ENCODE measurements at regions of chr12 and their contacts with region 1.

Region 1: GRCh38 chr12:104137913-104138796 is at the start of gene NFYB:
- DNase-seq: peak; percentile 95
- ATAC-seq: peak; percentile 98
- H3K4me3 Mint-ChIP-seq: peak within 1 kb of the TSS; percentile 83
- H3K27ac Mint-ChIP-seq: peak within 1 kb of the TSS; percentile 90
- H3K4me1 Mint-ChIP-seq: peaks cover 19% of the 10 kb centered on the region
- H3K27me3 Mint-ChIP-seq: no peaks in the 10 kb centered on the region
- total RNA-seq, gene NFYB: 18.8 to 27.2 TPM

Region 2: DNA sequence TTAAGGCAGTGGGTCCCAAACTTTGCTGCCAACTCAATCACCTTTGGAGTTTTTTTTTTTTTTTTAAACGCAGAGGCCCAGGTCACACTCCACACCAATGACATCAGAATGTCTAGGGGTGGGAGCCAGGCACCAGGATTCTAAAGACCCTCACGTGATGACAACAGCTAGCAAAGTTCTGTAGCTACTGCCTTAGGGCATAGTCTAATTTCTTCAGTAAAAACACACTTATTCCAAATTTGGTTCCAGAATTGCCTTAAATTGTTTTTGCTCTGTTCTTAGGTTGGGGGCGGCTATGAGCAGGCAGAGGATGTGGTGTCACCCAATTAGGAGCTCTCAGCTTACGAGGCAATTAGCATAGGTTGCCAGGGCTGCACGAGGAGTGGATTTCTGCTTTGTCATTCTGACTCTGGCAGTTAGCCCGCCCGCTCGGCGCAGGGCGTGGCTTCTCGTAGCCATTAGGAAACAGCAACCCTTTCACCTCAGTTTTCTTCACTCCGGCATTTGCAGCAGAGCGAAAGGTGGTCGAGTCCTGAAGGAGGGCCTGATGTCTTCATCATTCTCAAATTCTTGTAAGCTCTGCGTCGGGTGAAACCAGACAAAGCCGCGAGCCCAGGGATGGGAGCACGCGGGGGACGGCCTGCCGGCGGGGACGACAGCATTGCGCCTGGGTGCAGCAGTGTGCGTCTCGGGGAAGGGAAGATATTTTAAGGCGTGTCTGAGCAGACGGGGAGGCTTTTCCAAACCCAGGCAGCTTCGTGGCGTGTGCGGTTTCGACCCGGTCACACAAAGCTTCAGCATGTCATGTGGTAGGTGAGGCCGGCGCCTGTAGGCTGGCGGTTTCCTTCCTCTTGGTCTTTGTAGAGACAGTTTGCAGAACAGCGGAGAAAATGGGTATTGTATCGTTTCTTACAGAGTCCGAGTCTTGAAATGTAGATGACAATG is 148.7 kb after region 1 on chr12:
- CTCF ChIA-PET with region 1: interaction called, 3 read pairs
- POLR2A ChIA-PET with region 1: interaction called, 10 read pairs
- intact Hi-C with region 1: loop called (anchors 1 kb)
- DNase-seq: peak; percentile 95
- ATAC-seq: peak; percentile 84
- H3K4me3 Mint-ChIP-seq: peak overlapping the region; percentile 95
- H3K27ac Mint-ChIP-seq: peak overlapping the region; percentile 97
- H3K4me1 Mint-ChIP-seq: peaks cover 12% of the 10 kb centered on the region
- H3K27me3 Mint-ChIP-seq: no peaks in the 10 kb centered on the region

Region 3: DNA sequence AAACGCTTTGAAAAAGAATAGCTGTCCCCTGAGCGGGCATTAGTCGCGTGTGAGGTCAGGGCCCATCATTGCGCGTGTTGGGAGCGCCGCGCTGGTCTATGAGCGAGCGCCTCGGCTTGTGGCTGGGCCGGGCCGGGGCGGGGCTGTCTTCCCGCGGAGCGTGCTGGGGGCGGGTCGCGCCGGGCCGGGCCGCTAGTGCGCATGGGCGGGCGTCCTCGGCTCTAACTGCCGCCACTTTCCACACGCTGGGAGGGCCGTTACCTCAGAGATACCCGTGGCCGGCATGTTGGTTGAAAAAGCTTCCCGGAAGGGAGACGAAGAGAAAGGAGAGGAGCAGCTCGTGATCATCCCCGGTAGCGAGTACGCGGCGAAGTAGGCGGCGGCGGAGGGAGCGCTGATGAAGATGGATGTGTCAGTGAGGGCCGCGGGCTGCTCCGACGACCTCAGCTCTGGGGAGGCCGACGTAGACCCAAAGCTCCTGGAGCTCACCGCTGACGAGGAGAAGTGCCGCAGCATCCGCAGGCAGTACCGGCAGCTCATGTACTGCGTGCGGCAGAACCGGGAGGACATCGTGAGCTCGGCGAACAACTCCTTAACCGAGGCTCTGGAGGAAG is 165.5 kb after region 1 on chr12 and contains the start of gene EID3:
- CTCF ChIA-PET with region 1: no interaction called
- POLR2A ChIA-PET with region 1: no interaction called
- intact Hi-C with region 1: loop called (anchors 1 to 5 kb)
- DNase-seq: peak; percentile 95
- ATAC-seq: peak; percentile 97
- H3K4me3 Mint-ChIP-seq: peak within 1 kb of the TSS; percentile 81
- H3K27ac Mint-ChIP-seq: peak within 1 kb of the TSS; percentile 96
- H3K4me1 Mint-ChIP-seq: peaks cover 57% of the 10 kb centered on the region
- H3K27me3 Mint-ChIP-seq: no peaks in the 10 kb centered on the region
- total RNA-seq, gene EID3: 3.9 to 4.6 TPM

Region 4: DNA sequence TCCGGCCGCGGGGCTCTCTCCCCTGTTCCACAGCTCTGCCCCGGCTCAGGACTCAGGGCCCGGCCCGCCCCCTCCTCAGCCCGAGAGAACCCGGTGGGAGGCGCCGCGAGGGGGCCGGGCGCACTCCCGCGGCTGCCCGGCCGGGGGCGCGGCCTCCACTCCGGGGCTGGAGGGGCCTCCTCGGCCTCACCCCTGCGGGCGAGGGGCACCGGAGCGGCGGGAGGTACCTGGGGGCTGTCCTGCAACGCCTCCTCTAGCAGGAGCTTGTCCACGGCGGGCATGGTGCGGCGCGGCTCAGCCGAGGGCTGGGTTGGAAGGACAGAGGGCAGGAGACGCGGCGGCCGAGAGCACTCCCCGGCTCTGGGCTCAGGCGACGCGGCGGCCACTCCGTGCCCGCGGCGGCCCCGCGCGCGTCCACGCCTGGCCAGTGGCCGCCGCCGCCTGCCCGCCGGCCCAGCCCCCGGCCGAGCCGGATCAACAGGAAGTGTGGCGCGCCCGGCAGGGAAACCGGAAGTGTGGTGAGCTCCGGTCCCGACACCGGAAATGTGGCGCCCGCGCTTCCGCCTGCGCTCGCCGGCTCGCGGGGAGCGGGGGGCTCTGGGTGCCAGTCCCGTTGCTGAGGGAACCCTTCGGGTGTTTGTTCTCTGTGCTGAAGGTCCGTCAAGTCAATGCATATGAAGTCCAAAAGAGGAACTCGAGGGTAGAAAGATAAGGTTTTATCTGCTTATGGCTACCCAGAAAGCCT is 1097.7 kb after region 1 on chr12 and contains the start of gene APPL2:
- CTCF ChIA-PET with region 1: no interaction called
- POLR2A ChIA-PET with region 1: no interaction called
- intact Hi-C with region 1: loop called in 1 of 2 experiments (anchors 5 kb)
- DNase-seq: peak; percentile 87
- ATAC-seq: peak; percentile 84
- H3K4me3 Mint-ChIP-seq: peak within 1 kb of the TSS; percentile 85
- H3K27ac Mint-ChIP-seq: peak within 1 kb of the TSS; percentile 86
- H3K4me1 Mint-ChIP-seq: peaks cover 41% of the 10 kb centered on the region
- H3K27me3 Mint-ChIP-seq: no peaks in the 10 kb centered on the region
- total RNA-seq, gene APPL2: 13.9 to 17.2 TPM

Measured in activated CD4-positive, alpha-beta T cell treated with anti-CD3 and anti-CD28 coated beads for 36 hours (primary cell).